Activated CD4-positive, alpha-beta memory T cell treated with anti-CD3 and anti-CD28 coated beads, Interleukin-2, amount 10 ng/mL, durations not matched to agents 7 days and 5 days (primary cell): ENCODE measurements at regions of chr11 and their contacts with region 1.

Region 1: DNA sequence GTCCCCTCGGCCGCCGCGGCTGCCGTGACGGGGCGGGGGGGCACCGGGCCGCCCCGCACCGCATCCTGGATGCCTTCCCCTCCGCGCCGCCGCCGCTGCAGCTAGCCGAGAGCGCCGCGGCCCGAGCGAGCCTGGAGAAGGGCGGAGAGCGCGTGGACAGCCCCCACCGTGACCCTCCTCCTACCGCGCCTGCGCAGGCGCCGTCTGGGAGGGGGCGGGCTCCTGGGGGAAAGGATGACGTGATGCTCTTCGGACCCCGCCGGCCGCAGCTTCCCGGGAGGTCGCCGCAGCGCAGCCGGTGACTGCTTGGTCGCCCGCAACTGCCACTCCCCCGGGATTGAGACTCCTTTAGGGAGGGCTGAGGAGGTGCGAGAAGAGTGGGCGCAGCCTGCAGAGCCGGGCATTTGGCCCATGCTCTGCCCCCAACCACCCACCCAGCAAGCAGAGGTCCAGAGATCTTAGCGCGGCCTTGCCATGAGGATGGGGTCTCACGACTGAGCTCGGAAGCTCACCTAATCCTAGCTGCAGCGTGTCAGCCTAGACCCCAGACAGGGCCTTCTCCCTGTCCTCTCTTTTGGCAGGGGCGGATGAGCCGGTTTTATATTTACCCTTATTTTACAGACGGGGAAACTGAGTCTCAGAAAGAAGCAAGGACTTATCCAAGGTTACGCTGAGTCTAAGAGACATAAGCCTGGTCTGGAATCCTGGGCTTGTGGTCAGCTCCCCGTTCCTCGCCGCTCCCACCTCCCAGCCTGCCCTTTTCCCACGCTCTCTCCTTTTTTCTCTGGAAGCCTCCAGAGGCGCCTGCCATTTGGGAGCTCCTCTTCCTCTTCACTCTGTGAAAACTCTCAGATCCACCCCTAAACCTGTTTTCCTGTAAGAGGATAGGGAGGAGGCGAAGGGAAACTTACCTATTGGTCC is at the start of gene DENND5A:
- DNase-seq: peak; percentile 49
- H3K4me3 Mint-ChIP-seq: peak within 1 kb of the TSS; percentile 80
- H3K27ac Mint-ChIP-seq: peak within 1 kb of the TSS; percentile 68
- H3K4me1 Mint-ChIP-seq: peaks cover 30% of the 10 kb centered on the region
- H3K27me3 Mint-ChIP-seq: peaks cover 58% of the 10 kb centered on the region
- total RNA-seq, gene DENND5A: 11.6 to 13.7 TPM

Region 2: DNA sequence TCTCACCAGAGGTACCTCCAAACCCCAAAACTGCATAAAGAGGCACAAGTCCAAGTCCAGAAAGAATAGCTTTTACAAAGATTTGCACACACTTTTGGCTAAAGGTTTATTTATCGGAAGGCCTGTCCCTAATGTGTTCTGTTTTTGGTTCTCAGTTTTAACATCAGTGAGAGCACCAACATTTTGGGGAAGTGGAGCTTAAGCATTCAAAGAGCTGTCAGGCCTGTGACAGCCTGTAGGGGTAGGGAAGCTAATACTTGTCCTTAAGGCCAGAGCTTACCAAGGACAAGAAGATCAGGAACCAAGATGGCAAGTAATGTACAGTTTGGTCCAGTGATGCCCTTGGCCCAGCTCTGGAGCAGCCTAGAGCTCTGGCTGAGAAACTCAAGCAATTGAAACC is 135.2 kb before region 1 on chr11:
- CTCF ChIA-PET with region 1: no interaction called
- POLR2A ChIA-PET with region 1: no interaction called
- DNase-seq: no peak
- H3K4me3 Mint-ChIP-seq: no peak overlapping the region
- H3K27ac Mint-ChIP-seq: no peak overlapping the region
- H3K4me1 Mint-ChIP-seq: peaks cover 14% of the 10 kb centered on the region
- H3K27me3 Mint-ChIP-seq: no peaks in the 10 kb centered on the region

Region 3: DNA sequence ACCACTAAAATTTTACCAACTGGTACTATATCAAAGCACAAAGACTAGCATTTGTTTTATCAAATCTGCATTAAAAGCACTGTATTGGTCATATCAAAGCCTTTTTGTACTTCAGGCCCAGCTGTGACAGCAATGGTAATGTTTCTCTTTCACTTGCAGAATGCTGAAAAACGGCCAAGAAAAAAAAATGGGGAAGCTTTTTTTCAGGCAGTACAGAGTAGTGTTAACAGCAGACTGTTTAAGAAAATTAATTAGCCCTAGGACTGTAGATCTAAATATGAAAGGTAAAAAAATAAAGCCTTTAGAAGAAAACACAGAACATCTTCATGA is 33.7 kb before region 1 on chr11:
- CTCF ChIA-PET with region 1: no interaction called
- POLR2A ChIA-PET with region 1: no interaction called
- DNase-seq: no peak
- H3K4me3 Mint-ChIP-seq: peak overlapping the region; percentile 4
- H3K27ac Mint-ChIP-seq: no peak overlapping the region
- H3K4me1 Mint-ChIP-seq: peaks cover 17% of the 10 kb centered on the region
- H3K27me3 Mint-ChIP-seq: no peaks in the 10 kb centered on the region

Region 4: DNA sequence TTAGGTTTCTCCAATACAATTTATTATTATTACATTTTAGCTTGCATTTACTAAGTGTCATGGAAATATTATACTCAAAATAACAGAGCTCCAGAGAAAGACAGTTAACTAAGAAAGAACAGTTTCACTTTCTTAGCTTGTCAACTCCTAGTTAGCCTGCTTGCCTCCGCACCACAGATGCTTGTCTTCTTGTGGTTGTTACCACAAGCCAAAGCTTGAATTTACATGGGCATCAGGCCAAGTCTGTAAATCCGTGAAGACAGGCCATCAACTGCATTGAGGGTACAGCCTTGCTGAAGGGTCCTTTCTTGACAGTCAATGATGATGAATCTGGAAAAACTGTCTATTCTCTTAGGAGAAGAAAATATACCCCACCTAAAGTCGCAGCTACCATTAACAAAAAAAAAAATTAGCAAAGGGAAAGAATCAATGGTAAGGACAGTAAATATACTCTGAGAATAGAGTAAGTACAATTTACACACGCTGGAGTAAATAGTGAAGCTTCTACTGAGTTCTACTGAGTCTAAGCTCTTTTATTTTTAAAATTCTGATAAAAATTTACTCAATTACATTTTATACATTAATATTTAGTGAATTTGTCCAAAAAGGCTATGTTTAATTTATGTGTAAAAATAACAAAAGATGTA is 15.3 kb after region 1 on chr11:
- CTCF ChIA-PET with region 1: interaction called, 3 read pairs
- POLR2A ChIA-PET with region 1: interaction called, 10 read pairs
- DNase-seq: peak; percentile 73
- H3K4me3 Mint-ChIP-seq: no peak overlapping the region
- H3K27ac Mint-ChIP-seq: no peak overlapping the region
- H3K4me1 Mint-ChIP-seq: peaks cover 14% of the 10 kb centered on the region
- H3K27me3 Mint-ChIP-seq: peaks cover 6% of the 10 kb centered on the region

Region 5: GRCh38 chr11:9302448-9302847 is 37.0 kb after region 1 on chr11:
- CTCF ChIA-PET with region 1: no interaction called
- POLR2A ChIA-PET with region 1: no interaction called
- DNase-seq: no peak
- H3K4me3 Mint-ChIP-seq: no peak overlapping the region
- H3K27ac Mint-ChIP-seq: no peak overlapping the region
- H3K4me1 Mint-ChIP-seq: peaks cover 2% of the 10 kb centered on the region
- H3K27me3 Mint-ChIP-seq: no peaks in the 10 kb centered on the region

Region 6: GRCh38 chr11:9314291-9315036 is 49.0 kb after region 1 on chr11 and contains the start of gene TMEM41B:
- CTCF ChIA-PET with region 1: no interaction called
- POLR2A ChIA-PET with region 1: interaction called, 11 read pairs
- DNase-seq: peak; percentile 99
- H3K4me3 Mint-ChIP-seq: peak within 1 kb of the TSS; percentile 92
- H3K27ac Mint-ChIP-seq: peak within 1 kb of the TSS; percentile 91
- H3K4me1 Mint-ChIP-seq: peaks cover 36% of the 10 kb centered on the region
- H3K27me3 Mint-ChIP-seq: peaks cover 21% of the 10 kb centered on the region
- total RNA-seq, gene TMEM41B: 43.3 to 49.0 TPM